ENCODE measurements at regions of chr6 and their contacts with region 1.

Region 1: GRCh38 chr6:3751730-3752542 is 423 bp upstream of the PXDC1 start:
- DNase-seq: peak; percentile 91 to 93 (median 92)
- H3K4me3 ChIP-seq: peak overlapping the region; percentile 87
- H3K27ac ChIP-seq: peak overlapping the region; percentile 88 to 89
- H3K4me1 ChIP-seq: peaks cover 3% of the 10 kb centered on the region
- H3K27me3 ChIP-seq: no peaks in the 10 kb centered on the region
- CTCF ChIP-seq: peak in 2 of 3 donors; percentile 44 to 67
- EP300 ChIP-seq: no peak
- POLR2A ChIP-seq: peak; percentile 76

Region 2: DNA sequence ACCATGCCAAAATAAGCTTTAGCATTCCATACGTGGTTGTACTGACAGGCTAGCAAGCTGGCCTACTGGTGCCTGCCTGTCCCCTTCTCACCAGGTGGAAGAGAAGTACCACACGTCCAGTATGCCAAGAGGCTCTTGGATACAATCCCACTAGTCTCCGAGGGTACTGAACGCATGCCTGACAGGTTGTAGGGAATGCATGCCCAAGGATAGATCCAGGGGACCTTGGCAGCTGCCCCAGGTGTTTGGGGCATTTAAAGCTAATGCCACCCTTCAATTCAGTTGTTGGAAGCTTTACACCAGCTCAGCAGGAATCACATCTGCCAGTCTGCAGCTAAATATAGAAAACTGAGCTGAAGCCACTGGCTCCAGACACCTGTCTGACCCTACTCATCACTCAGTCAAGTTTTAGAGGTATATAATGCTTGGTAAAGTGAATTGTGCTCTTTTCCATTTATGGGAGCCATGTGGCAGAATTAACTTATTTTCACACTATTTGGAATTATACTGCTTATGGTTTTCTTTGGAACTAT is 529.4 kb before region 1 on chr6:
- intact Hi-C with region 1: no loop called
- DNase-seq: no peak
- H3K4me3 ChIP-seq: no peak overlapping the region
- H3K27ac ChIP-seq: no peak overlapping the region
- H3K4me1 ChIP-seq: peaks cover 3% of the 10 kb centered on the region
- H3K27me3 ChIP-seq: no peaks in the 10 kb centered on the region
- CTCF ChIP-seq: no peak
- EP300 ChIP-seq: no peak
- POLR2A ChIP-seq: no peak

Region 3: DNA sequence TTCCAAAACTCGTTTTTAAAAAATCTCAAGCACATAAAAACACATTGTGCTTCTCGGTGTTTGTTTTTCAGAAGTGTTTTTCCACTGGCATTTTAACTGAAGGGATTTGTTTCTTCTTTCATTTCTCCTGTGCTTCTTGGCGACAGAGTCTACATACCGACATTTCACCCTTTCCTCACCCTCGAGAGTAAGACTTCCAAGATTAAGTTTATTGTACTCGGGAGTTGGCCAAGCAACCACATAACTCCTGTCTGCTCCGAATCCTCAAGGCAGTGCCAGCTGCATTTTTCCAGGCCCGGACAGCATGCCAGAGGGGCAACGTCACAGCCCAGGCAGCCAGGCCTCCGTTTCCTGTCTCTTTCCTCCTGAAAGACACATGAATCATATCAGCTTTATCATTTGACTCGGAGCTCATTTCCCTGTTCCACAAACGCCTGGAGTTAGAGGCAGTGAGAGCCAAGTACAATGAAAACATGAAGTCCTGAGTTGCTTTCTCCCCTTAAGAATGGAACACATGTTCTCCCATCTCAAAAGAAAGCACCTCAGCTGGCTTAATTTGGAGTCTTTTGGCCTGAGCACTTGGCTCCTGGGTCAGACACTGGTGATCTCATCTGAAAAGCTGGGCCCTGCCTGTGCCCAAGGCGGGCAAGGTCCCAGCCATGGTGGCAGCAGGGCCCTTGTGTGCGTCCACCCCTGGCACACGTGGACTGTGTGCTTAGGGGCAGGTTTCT is 74.1 kb after region 1 on chr6:
- intact Hi-C with region 1: loop called in 2 of 4 experiments (anchors 5 kb)
- DNase-seq: peak; percentile 80 to 90 (median 82)
- H3K4me3 ChIP-seq: peak overlapping the region; percentile 23
- H3K27ac ChIP-seq: peak overlapping the region; percentile 44 to 78
- H3K4me1 ChIP-seq: peaks cover 7% of the 10 kb centered on the region
- H3K27me3 ChIP-seq: no peaks in the 10 kb centered on the region
- CTCF ChIP-seq: no peak
- EP300 ChIP-seq: peak; percentile 9
- POLR2A ChIP-seq: no peak

Region 4: DNA sequence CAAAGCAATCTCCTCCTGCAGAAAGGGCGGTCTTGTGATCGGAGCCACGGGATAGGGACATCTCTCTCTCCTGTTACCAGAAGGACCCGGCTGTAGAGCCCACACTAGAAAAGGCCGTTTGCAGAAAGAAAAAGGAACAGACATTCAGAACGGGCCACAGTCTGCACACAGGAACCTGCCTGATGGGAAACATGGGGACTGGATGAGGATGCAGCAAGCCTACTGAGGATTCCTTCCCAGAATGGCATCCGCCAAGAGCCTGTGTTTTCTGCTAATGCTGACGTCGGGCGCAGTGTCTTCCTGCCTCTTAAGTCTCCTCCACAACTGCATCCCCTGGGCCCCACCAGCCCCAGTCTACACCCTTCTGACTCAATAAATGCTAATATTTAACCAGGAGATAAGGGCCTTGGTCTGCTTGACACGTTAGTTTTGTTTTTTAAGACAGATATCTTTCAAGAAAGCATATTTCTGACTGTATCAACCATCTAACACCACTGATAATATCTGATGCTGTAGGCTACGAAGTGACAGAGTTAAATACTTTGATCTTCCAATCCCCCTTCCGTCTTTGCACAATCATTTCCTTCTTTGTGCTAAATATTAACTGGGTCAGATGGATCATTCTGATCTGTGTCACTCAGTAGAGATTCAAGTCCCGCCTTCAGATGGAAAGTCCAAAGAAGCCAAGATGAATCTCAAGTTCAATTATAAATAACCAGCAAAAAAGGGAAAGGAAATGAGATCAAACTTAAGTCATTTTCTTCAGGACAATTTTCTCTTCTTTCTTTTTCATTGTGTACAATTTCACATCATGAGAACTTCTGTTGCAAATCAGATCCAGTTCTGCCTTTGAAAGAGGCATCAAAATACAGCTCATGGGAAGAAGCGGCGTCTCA is 117.9 kb after region 1 on chr6:
- intact Hi-C with region 1: no loop called
- DNase-seq: no peak
- H3K4me3 ChIP-seq: no peak overlapping the region
- H3K27ac ChIP-seq: no peak overlapping the region
- H3K4me1 ChIP-seq: no peaks in the 10 kb centered on the region
- H3K27me3 ChIP-seq: no peaks in the 10 kb centered on the region
- CTCF ChIP-seq: no peak
- EP300 ChIP-seq: no peak
- POLR2A ChIP-seq: no peak

Region 5: GRCh38 chr6:3990692-3991501 is 239.0 kb after region 1 on chr6:
- intact Hi-C with region 1: loop called in 2 of 4 experiments (anchors 5 to 10 kb)
- DNase-seq: peak; percentile 84 to 89 (median 88)
- H3K4me3 ChIP-seq: peak overlapping the region; percentile 27
- H3K27ac ChIP-seq: peak overlapping the region in 1 of 2 donors; percentile 29
- H3K4me1 ChIP-seq: peaks cover 4% of the 10 kb centered on the region
- H3K27me3 ChIP-seq: no peaks in the 10 kb centered on the region
- CTCF ChIP-seq: peak; percentile 52 to 74 (median 69)
- EP300 ChIP-seq: no peak
- POLR2A ChIP-seq: no peak

Region 6: GRCh38 chr6:4008324-4009047 is 256.6 kb after region 1 on chr6:
- intact Hi-C with region 1: loop called in 1 of 4 experiments (anchors 5 kb)
- DNase-seq: no peak
- H3K4me3 ChIP-seq: no peak overlapping the region
- H3K27ac ChIP-seq: no peak overlapping the region
- H3K4me1 ChIP-seq: peaks cover 3% of the 10 kb centered on the region
- H3K27me3 ChIP-seq: no peaks in the 10 kb centered on the region
- CTCF ChIP-seq: peak in 2 of 3 donors; percentile 40 to 60
- EP300 ChIP-seq: no peak
- POLR2A ChIP-seq: no peak

Measured in ovary (tissue), 10 donors.